Common myeloid progenitor, CD34-positive (primary cell): ENCODE measurements at regions of chr6 and their contacts with region 1.

Region 1: GRCh38 chr6:71383901-71384489 is 95.4 kb downstream of the OGFRL1 start:
- DNase-seq: peak; percentile 53 to 76 (median 61)
- H3K4me3 ChIP-seq: no peak overlapping the region
- H3K27ac ChIP-seq: no peak overlapping the region
- H3K4me1 ChIP-seq: no peaks in the 10 kb centered on the region
- H3K27me3 ChIP-seq: no peaks in the 10 kb centered on the region

Region 2: DNA sequence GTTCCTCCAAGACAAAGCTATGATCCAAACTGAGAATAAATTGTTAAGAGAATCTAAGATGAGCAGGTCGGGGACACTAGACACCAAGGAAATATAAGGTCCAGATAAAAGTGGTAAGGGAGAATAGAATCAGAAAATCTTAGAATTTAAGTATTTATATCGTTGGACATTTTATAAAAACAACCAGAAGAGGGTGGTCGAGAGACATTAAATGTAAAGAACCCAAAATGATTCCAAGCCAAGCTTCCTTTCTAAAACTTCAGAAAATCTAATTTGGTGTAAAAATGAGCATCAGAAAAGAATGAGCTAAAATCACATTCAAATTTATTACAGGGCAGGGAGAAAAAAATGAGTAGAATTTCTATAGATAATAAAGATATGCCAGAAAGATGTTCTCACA is 193.2 kb before region 1 on chr6:
- CTCF ChIA-PET with region 1: interaction called, 10 read pairs
- POLR2A ChIA-PET with region 1: no interaction called
- DNase-seq: peak; percentile 47 to 69 (median 59)
- H3K4me3 ChIP-seq: no peak overlapping the region
- H3K27ac ChIP-seq: no peak overlapping the region
- H3K4me1 ChIP-seq: peaks cover 6 to 15% (median 11%) of the 10 kb centered on the region in 4 experiments
- H3K27me3 ChIP-seq: no peaks in the 10 kb centered on the region

Region 3: GRCh38 chr6:71333697-71334096 is 50.3 kb before region 1 on chr6:
- CTCF ChIA-PET with region 1: no interaction called
- POLR2A ChIA-PET with region 1: no interaction called
- DNase-seq: no peak
- H3K4me3 ChIP-seq: no peak overlapping the region
- H3K27ac ChIP-seq: no peak overlapping the region
- H3K4me1 ChIP-seq: peaks cover 0 to 9% (median 0%) of the 10 kb centered on the region in 4 experiments
- H3K27me3 ChIP-seq: no peaks in the 10 kb centered on the region

Region 4: GRCh38 chr6:71396410-71396801 is 12.4 kb after region 1 on chr6:
- CTCF ChIA-PET with region 1: interaction called, 13 read pairs
- POLR2A ChIA-PET with region 1: no interaction called
- DNase-seq: no peak
- H3K4me3 ChIP-seq: no peak overlapping the region
- H3K27ac ChIP-seq: no peak overlapping the region
- H3K4me1 ChIP-seq: no peaks in the 10 kb centered on the region
- H3K27me3 ChIP-seq: no peaks in the 10 kb centered on the region

Region 5: DNA sequence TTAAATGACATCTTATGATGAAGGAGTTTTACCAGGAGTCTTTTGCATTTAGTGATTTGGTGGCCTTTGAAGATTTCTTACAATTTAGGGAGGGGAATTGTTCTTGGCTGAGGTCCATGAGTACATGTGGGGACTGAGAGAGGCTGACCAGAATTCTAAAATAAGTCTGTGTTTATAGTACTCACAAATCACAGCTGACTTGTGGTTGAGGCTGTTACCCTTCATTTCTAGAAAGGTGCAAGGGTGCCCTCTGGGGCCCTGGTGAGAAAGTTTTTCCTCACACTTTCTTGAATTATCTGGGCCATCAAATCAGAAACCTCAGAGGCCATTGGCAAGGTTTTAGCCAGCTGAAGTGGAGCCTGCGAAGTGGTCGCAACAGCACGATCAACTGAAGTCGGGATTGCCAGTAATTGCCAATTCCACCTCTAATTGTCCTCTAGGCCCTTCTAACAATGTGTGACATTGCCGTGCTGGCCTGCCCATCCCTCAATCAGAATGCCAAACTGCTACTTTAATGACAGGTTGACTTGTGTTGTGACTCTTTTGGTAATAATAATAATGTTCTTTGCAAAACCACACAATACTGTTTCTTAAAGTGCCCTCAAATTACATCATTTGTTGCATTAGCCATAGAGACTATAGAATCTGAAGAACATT is 126.2 kb after region 1 on chr6:
- CTCF ChIA-PET with region 1: interaction called, 56 read pairs
- POLR2A ChIA-PET with region 1: no interaction called
- DNase-seq: peak; percentile 52 to 75 (median 73)
- H3K4me3 ChIP-seq: no peak overlapping the region
- H3K27ac ChIP-seq: no peak overlapping the region
- H3K4me1 ChIP-seq: no peaks in the 10 kb centered on the region
- H3K27me3 ChIP-seq: peaks cover 0 to 2% (median 0%) of the 10 kb centered on the region in 5 experiments